GM13977 (cell line): ENCODE measurements at regions of chr6 and their contacts with region 1.

Region 1: DNA sequence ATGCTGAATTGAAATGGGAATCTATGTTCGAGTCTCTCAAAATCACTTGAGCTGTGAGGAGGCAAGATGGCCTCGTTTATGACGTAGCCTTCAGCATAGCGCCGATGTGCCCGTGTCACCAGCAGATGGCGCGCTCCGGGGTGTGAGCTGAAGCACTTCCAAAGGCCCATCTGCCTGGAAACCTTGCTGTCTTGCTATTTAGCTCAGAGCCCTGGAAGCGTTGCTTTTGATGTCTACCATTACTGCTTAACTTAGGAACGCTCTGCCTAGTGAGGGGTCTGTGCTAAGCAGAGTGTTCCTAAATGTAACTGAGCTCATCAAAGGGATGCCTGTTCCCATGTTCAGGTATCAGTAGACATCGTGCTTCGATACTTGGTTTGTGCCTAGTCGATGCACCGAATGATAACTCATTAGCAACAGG is 67.7 kb downstream of the SYCP2L start:
- DNase-seq: peak; percentile 69
- CTCF ChIP-seq: peak; percentile 90

Region 2: DNA sequence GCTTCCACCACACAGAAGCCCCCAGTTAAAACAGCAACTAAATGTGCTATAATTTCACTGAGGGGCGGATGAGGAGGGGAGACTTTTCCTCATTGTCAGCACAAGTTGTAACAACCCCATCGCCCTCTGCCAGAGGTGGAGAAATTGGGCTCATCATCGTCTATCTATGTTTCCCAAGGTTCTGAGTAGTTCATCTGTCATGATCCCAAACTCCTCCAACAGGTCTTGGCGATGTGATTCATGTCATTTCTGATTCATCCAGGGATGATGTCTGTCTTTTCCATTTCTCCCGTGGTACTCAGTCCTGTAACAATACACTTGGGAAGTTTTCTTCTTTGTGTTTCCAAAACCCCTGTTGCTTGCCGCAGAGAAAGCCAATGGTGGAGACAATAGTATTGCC is 590.7 kb before region 1 on chr6:
- in situ Hi-C with region 1: no loop called
- DNase-seq: no peak
- CTCF ChIP-seq: no peak

Region 3: DNA sequence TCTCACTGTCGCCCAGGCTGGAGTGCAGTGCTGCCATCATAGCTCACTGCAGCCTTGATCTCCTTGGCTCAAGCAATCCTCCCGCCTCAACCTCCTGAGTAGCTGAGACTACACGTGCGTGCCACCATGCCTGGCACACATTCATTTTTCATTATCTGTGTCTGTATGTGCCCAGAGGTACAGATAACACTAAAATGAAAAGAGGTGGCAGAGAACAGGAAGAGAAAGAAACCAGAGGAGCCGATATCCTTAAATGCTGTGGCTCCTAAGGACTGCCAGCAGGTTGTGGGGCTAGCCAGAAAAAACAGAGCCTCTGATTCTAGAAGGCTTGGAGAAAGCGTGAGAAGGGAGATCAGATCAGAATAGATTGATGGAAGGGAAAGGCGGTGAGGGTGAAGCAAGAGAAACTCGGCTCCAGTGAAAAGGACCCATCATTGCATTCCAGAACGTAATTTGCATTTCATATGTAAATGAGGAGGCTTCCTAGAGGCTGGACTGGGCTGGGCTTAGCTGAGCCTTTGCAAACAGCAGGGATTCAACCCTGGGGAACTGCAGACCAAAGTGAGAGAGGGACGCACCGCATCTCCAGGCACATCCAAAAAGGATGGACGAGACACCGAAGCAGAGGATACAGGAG is 369.3 kb before region 1 on chr6:
- in situ Hi-C with region 1: no loop called
- DNase-seq: no peak
- CTCF ChIP-seq: no peak

Region 4: DNA sequence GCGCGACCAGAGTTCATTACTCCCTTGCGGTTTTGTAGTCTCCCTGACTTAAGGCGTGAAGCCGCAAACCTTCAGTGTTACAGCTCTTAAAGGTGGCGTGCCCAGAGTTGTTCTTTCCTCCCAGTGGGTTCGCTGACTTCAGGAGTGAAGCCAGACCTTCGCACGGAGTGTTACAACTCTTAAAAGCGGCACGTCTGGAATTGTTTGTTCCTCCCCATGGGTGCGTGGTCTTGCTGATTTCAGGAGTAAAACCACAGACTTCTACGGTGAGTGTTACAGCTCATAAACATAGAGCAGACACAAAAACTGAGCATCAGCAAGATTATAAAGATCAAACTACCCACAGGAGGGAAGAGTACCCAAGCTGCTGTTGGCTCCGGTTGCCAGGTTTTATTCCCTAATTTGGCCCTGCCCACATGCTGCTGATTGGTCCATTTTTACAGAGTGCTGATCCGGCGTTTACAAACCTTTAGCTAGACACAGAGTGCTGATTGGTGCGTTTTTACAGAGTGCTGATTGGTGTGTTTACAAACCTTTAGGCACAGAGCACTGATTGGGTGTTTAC is 221.4 kb before region 1 on chr6:
- in situ Hi-C with region 1: no loop called
- DNase-seq: no peak
- CTCF ChIP-seq: no peak

Region 5: DNA sequence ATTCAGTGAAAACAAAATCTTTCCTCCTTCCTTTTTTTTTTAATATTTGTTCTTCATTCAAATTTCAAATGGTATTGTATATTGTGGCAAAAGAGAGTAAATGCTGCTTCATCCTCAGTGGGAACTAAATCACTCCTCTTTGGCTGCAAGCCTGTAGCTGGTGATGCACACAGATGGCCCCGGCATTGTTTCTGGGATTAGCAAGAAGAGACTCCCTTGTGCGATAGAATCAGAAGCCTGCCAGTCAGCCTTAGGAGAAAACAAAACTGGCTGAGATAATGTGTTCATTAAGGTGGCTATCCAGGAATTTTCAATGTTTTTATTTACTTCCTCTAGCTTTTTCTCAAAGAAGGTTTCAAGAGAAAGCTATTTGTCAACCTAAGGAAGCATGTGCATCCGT is 110.2 kb after region 1 on chr6:
- in situ Hi-C with region 1: loop called (anchors 10 kb)
- DNase-seq: no peak
- CTCF ChIP-seq: no peak